ENCODE measurements at regions of chr20 and their contacts with region 1.

Region 1: DNA sequence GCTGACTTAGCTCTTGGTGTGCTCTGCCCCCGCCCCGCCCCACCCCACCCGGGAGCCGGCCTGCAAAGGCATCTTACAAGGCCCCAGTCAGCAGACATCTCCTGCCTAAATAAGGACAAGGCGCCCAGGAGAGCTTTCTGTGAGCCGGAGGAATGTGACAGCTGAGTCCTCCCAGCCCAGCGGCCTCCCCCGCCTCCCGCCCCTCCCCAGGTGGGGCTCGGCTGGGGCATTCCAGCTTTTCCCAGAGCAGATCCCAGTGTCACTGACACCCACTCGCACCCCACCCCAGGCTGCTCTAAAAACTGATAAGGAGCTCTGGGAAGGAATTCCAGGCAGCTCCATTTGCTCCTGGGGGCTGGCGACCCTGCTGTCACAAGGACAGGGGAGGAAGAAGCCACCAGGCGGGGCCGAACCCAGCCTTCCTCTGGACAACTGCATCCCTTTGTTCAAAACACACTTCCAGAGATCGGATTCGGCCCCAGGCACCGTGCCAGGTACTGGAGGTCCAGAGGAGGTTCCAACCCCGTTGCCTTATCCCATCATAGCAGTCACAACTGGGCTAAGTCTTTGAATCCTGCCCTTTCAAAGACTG is 49.7 kb downstream of the JPH2 start:
- DNase-seq: peak; percentile 91

Region 2: DNA sequence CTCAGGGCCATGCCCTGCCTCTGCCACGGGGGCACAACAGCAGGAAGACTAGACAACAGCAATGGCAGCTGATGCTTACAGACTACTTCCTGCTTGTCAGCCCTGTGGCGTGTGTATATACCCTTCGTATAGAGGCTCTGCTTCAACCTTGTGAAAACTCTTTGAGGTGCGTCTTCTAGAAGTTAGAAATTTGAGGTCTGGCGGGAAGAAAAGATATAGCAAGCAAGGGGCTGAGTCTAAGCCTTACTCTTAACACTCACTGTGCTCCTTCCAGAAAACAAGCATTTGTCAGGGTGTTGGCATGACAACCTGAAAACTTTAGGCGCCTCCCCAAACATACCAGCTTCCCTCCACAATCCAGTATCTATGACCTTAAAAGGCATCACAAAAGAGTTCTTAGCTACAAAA is 16.3 kb after region 1 on chr20:
- intact Hi-C with region 1: loop called (anchors 1 kb)
- DNase-seq: no peak